HEK293T (cell line): ENCODE measurements at regions of chrX and their contacts with region 1.

Region 1: GRCh38 chrX:140507991-140508323 is 3.1 kb upstream of the SOX3 start:
- DNase-seq: peak; percentile 66

Region 2: DNA sequence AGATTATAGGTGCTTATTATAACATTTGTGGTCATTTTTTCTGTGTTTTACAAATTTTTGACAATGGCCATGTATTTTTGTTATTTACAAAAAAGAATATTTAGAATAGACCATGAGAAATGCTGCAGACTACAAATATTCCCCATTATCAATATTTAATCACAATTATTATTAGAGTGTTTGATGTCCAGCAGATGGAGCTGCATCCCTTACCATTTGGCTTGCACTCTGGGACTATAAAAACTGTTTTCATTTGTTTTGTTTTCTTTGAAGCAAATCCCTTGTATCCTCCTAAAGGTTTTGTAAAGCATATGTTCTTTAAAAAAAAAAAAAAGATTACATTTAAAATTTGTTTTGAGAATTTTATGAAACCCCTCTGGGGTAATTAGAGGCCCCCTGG is 457.1 kb before region 1 on chrX:
- CTCF ChIA-PET with region 1: interaction called, 10 read pairs
- POLR2A ChIA-PET with region 1: no interaction called
- DNase-seq: no peak

Region 3: DNA sequence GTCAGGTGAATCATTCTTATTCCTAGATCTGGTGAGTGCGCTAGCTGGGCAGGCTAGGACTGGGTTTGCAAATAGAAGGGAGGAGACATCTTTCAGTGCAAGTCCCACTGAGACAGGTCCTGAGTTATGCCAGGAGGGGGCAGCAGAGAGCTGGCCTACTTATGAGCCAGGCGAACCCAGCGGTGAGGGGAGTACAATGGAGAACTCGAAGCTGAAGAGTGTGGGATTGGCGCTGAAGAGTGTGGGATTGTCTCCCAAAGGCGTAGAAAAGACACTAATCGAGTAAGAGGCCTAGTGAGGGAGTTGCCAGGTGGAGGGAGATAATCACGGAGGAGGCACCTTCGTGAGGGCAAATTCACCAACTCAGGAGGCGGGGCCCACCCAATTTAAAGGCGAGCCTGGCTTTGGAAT is 451.0 kb before region 1 on chrX:
- CTCF ChIA-PET with region 1: interaction called, 14 read pairs
- POLR2A ChIA-PET with region 1: no interaction called
- DNase-seq: peak; percentile 79

Region 4: GRCh38 chrX:140440876-140441275 is 67.1 kb before region 1 on chrX:
- CTCF ChIA-PET with region 1: no interaction called
- POLR2A ChIA-PET with region 1: no interaction called
- DNase-seq: no peak